Spleen (tissue), 13 donors: ENCODE measurements at regions of chr6 and their contacts with region 1.

Region 1: DNA sequence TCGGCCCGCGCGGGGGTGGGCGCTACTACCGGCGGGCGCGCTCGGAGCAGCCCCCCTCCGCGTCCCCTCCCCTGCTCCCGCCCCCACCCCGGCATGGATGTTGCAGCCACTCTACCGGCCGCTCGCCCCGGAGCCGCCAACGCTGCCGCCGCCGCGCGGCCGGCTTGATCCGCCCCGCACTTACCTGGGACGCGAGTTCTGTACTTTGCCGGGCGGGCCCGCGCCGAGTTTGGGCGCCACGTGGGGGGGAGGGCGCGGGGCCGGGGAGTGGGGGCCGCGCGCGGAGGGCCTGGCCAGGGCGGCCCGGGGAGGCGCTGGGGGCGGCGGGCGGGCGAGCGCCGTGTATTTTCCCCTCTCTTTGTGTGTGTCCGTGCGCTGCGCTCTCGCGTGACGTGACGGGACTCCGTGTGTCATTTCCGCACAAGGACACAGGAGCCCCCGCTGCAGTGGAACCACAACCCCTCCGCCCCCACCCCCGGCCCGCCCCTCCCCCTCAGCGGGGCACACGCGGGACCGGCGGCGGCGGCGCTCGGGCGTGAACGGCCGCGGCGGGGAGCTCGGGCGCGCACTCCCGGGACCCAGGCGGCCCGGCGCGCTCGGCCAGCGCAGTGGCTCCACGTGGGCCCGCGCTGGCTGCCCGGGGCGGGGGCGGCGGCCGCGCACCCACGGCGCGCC is at the start of gene BEND3:
- DNase-seq: peak; percentile 85
- H3K4me3 ChIP-seq: peak within 1 kb of the TSS; percentile 59 to 93 (median 78)
- H3K27ac ChIP-seq: peak within 1 kb of the TSS in 7 of 8 donors; percentile 45 to 77 (median 66)
- H3K4me1 ChIP-seq: peaks cover 6 to 32% (median 25%) of the 10 kb centered on the region in 6 donors
- H3K27me3 ChIP-seq: peaks cover 0 to 36% (median 2%) of the 10 kb centered on the region in 7 donors
- CTCF ChIP-seq: no peak
- POLR2A ChIP-seq: no peak
- total RNA-seq, gene BEND3: 1.5 to 2.6 (median 2.2) TPM

Region 2: GRCh38 chr6:106959985-106960384 is 155.1 kb before region 1 on chr6:
- intact Hi-C with region 1: no loop called
- DNase-seq: no peak
- H3K4me3 ChIP-seq: no peak overlapping the region
- H3K27ac ChIP-seq: peak overlapping the region in 1 of 8 donors; percentile 22
- H3K4me1 ChIP-seq: no peaks in the 10 kb centered on the region
- H3K27me3 ChIP-seq: no peaks in the 10 kb centered on the region
- CTCF ChIP-seq: no peak
- POLR2A ChIP-seq: no peak

Region 3: DNA sequence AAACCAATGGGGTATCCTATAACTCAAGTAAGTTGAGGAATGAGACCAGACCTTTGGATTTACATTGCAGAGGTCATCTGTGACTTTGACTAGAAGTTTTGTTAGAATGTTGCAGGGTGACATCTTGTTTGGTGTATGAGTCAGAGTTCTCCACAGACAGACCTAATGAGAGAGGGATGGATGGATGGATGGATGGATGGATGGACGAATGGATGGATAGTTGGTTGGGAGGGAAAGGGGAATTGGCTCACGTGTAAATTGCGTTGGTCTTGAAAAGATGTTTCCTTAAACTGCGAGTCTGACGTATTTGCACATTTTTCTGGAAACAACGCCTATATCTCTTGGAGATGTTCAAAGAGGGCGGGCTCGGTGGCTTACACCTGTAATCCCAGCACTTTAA is 88.1 kb before region 1 on chr6:
- intact Hi-C with region 1: loop called (anchors 5 kb)
- DNase-seq: no peak
- H3K4me3 ChIP-seq: no peak overlapping the region
- H3K27ac ChIP-seq: no peak overlapping the region
- H3K4me1 ChIP-seq: peaks cover 4 to 39% (median 27%) of the 10 kb centered on the region in 6 donors
- H3K27me3 ChIP-seq: no peaks in the 10 kb centered on the region
- CTCF ChIP-seq: no peak
- POLR2A ChIP-seq: no peak

Region 4: DNA sequence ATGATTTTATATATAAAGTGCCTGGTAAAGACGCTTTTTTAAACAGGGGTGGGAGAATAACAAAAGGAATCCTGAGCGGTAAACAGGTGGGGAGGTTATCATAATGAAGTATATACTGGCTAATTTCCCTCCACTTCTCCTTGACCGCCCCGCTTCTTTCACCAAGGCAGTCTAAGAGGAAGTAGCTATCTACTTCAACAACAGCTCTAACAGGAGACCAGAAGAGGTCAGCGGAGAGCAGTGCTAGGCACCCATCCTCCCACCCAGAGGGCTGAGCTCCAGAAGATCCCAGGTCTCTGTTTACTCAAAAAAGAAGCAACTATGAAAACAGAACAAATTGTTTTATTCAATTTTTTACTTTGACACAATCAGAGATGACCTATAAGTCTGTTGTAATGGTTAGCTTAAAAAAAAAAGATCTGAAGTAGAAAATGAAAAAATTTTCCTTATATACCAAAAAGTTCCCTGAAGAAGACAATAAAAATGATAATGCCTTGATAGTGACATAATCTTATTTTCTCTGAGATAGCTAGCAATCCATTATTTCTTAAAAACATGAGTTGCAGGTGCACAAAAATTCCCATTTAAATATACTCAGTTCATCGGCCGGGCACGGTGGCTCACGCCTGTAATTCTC is 203.2 kb after region 1 on chr6:
- intact Hi-C with region 1: no loop called
- DNase-seq: peak; percentile 72
- H3K4me3 ChIP-seq: no peak overlapping the region
- H3K27ac ChIP-seq: no peak overlapping the region
- H3K4me1 ChIP-seq: peaks cover 0 to 20% (median 5%) of the 10 kb centered on the region in 6 donors
- H3K27me3 ChIP-seq: no peaks in the 10 kb centered on the region
- CTCF ChIP-seq: peak in 7 of 11 experiments; percentile 26 to 51 (median 43)
- POLR2A ChIP-seq: no peak